Left cardiac atrium (tissue), 4 donors: ENCODE measurements at regions of chr22 and their contacts with region 1.

Region 1: DNA sequence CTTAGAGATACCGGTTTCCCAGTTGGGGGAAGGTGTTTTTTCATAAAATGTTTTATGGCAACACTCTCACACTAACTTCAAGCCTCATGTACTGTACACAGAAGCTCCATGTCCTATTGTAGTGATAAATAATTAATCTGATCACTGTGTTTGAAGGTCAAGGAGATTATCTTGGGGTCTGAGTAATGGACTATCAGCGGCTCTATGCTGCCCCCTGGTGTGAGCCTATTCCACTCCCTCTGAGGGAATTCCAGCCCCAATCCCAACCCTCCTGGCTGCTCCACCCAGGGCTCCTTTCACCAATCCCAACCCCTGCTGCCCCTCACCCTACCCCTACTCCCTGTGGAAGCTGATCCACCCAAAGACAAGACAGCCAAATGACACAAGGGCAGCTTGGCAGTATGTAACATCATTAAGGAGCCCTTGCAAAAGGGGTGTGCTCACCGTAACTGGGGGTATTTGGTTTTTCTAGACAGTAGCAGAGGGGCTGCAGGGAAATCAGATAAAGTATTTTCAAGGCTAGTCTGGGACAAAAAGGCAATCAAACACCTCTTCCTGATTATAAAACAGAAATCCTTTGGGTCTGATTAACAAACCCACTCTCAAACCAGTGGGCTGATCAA is 22.3 kb downstream of the HPS4 start:
- DNase-seq: peak; percentile 66
- ATAC-seq: peak; percentile 70 to 81

Region 2: DNA sequence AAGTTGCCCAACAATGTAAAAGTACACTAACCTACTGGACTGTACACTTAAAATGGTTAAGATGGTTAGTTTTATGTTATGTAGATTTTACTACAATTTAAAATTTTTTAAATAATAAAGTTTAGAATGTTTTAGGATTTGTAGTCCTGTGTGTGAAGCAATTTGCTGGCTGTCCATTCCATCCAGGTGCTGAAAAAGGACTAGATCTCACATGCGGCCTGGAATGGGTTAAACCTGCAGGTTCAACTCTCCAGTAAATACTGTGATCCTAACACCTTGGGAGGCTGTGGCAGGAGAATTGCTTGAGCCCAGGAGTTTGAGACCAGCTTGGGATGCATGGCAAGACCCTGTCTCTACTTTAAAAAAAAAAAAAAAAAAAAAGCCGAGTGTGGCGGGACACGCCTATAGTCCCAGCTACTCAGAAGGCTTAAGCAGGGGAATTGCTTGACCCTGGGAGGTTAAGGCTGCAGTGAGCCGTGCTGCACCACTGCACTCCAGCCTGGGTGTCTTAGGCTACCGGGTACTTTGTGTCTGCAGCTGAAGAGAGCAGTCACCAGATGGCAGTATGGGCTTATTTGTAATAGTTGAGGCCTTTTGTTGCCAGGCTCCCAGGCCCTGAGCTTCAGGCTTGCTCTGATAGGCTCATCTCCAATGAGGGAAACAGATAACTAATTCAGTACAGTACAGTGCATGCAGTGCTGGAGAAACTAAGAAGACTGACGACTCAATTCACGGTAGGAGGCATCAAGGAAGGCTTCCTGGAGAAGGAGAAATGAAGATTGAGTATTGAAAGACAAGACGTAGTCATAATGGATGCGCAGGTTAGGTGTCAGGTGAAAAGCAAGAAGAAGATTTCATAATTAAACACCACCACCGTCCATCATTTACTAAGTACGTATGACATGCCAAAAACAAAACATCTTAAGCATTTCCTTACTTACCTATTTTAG is 97.0 kb before region 1 on chr22:
- intact Hi-C with region 1: loop called in 1 of 2 experiments (anchors 2 kb)
- DNase-seq: peak; percentile 61
- ATAC-seq: peak; percentile 89 to 92

Region 3: DNA sequence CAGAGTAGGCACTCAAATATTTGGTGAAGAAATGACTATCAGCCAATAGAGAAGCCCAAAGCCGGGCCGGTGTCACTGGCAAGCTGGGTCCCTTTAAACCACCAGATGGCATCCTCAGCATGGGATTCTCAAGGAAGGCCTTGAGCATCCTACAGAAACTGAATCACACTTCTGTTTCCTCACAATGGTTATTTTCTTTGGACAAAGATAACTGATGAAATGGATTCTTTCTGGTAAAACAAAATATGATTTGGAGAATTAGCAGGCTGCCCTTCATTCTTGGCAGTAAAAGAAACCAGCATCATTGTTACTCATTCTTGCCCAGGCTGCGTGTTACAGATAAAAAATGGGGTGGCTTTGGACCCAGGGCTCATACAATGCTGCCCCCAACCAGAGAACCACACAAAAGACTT is 62.6 kb before region 1 on chr22:
- intact Hi-C with region 1: loop called (anchors 2 to 5 kb)
- DNase-seq: peak; percentile 57
- ATAC-seq: peak; percentile 70 to 92